ENCODE measurements at regions of chr1 and their contacts with region 1.

Region 1: DNA sequence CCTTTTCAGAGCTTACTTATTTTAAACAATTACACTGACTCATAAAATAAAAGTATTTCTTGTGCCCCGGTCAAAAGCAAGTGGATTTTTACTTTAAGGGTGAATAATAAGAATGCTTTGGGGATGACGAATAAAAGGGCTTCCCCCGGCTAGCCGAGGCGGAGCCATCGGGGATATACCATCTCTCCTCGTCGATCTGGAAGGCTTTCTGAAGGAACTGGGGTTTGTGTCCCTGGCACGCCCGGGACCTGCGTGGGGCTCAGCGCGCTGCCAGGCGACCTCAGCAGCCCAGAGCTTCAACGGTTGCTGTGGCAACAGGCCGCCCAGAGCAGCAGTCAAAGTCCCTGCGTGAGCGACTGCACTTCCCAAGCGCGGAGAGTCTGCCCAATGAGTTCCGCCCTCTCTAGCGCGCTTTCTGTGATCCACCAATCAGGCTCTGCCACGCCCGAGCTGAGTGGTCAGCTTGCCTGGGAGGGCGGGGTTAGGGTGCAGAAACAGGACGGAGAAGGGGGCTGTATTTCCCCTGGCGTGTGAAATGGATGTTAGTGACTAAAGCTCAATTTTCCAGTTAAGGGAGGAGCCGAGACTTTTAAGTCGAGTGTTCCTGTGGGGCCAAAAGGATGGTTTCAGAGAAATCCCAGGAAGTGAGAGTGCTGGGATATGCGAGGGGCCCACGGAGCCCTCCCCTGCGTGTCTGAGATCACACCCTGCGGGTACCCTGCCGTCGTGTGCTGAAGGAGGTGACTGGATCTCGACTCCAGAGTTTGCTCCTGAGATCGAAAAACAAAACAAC is 33.0 kb upstream of the MGST3 start:
- DNase-seq: peak; percentile 97

Region 2: GRCh38 chr1:165392634-165393571 is 205.2 kb before region 1 on chr1:
- in situ Hi-C with region 1: loop called (anchors 10 kb)
- DNase-seq: peak; percentile 97